Mammary epithelial cell (primary cell): ENCODE measurements at regions of chr5 and their contacts with region 1.

Region 1: DNA sequence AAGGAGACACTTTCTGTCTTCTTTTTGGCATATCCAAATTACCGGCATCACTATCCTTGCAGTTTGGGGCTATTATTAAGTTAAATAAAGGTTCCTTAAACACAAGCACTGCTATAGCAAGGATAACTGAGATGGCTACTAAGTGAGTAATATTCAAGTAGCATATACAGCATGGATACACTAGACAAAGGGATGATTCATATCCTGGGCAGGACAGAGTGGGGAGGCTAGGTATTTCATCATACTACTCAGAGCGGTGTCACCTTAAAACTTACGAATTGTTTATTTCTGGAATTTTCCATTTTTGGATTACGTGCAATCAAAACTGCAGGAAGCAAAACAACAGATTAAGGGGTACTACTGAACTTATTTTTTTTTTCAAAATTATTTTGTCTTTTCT is 54.1 kb downstream of the FER start:
- DNase-seq: peak; percentile 86
- H3K4me3 ChIP-seq: peak overlapping the region in 2 of 3 experiments; percentile 7 to 28
- H3K27ac ChIP-seq: peak overlapping the region; percentile 81
- H3K4me1 ChIP-seq: peaks cover 24% of the 10 kb centered on the region
- H3K27me3 ChIP-seq: no peaks in the 10 kb centered on the region
- CTCF ChIP-seq: no peak

Region 2: GRCh38 chr5:108727651-108728565 is 73.9 kb before region 1 on chr5:
- CTCF ChIA-PET with region 1: no interaction called
- dilution Hi-C with region 1: no loop called
- in situ Hi-C with region 1: no loop called
- intact Hi-C with region 1: loop called (anchors 2 kb)
- DNase-seq: peak; percentile 89
- H3K4me3 ChIP-seq: peak overlapping the region; percentile 64 to 88 (median 73)
- H3K27ac ChIP-seq: peak overlapping the region; percentile 82
- H3K4me1 ChIP-seq: peaks cover 31% of the 10 kb centered on the region
- H3K27me3 ChIP-seq: no peaks in the 10 kb centered on the region
- CTCF ChIP-seq: no peak